ENCODE measurements at regions of chr1 and their contacts with region 1.

Region 1: DNA sequence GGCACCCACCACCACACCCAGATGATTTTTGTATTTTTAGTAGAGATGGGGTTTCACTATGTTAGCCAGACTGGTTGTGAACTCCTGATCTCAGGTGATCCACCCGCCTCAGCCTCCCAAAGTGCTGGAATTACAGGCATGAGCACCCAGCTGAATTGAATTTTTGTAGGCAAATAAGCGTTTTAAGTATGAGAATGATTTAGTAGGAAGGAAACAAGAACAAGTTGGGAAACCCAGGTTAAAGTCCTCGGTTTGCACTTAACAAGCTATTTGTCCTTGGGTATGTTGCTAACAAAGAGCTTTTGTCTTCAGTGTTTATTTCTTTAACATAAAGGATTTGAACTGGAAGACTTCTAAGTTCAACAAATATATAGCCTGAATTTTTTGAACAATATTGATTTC is 23.9 kb downstream of the BTF3L4 start:
- DNase-seq: no peak
- ATAC-seq: no peak
- H3K4me3 ChIP-seq: no peak overlapping the region
- H3K4me3 Mint-ChIP-seq: no peak overlapping the region
- H3K27ac ChIP-seq: no peak overlapping the region
- H3K27ac Mint-ChIP-seq: peak overlapping the region in 1 of 2 donors; percentile 59
- H3K4me1 ChIP-seq: no peaks in the 10 kb centered on the region
- H3K4me1 Mint-ChIP-seq: peaks cover 0 to 5% (median 3%) of the 10 kb centered on the region in 3 donors
- H3K27me3 ChIP-seq: no peaks in the 10 kb centered on the region
- H3K27me3 Mint-ChIP-seq: no peaks in the 10 kb centered on the region

Region 2: DNA sequence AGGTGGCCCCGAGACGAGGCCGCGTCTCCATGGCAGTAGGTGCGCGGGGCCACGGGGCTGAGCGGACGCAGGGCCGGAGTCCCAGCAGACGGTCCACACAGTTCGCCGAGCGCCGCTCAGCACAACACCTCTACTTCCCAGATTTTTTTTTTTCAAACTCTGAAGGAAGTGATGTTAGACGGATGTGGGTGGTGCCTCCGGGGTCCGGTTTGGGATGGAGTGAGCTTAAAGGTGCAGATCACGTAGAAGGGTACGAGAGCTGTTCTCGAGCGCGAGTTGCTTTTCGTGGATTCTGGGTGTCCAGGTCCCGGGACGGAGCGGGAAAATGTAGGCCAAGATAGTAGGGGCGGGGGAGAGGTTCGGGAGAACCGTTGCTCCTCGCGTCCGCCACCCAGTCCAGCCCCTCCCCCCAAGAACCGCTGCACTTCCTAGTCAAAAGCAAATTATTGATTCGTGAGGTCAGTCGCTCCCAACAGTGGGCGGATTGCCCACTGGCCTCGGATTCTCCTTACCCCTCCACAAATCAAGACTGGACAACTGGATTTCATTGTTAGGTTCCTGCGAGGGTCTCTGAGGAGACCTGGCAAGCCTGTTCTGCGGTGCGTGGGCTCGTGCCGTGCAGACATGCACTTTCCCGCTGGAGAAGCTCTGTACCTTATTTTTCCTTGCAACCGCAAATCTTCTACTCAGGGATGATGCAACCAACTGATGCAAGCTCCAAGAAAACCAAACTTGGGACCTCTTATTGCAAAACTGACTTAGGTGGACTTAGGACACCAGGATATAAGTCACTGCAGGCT is 24.7 kb before region 1 on chr1 and contains the start of gene TXNDC12:
- CTCF ChIA-PET with region 1: no interaction called
- POLR2A ChIA-PET with region 1: interaction called in 1 of 2 experiments, 11 read pairs
- DNase-seq: peak in 34 of 35 experiments; percentile 6 to 75 (median 38)
- ATAC-seq: peak; percentile 11 to 43 (median 34)
- H3K4me3 ChIP-seq: peak within 1 kb of the TSS; percentile 84 to 99
- H3K4me3 Mint-ChIP-seq: peak within 1 kb of the TSS; percentile 94 to 97 (median 97)
- H3K27ac ChIP-seq: peak within 1 kb of the TSS; percentile 84
- H3K27ac Mint-ChIP-seq: peak within 1 kb of the TSS; percentile 95 to 96
- H3K4me1 ChIP-seq: peaks cover 14 to 15% of the 10 kb centered on the region in 2 experiments
- H3K4me1 Mint-ChIP-seq: peaks cover 63 to 69% (median 63%) of the 10 kb centered on the region in 3 donors
- H3K27me3 ChIP-seq: no peaks in the 10 kb centered on the region
- H3K27me3 Mint-ChIP-seq: no peaks in the 10 kb centered on the region
- total RNA-seq, gene TXNDC12: 26.1 to 44.8 (median 40.3) TPM

Region 3: DNA sequence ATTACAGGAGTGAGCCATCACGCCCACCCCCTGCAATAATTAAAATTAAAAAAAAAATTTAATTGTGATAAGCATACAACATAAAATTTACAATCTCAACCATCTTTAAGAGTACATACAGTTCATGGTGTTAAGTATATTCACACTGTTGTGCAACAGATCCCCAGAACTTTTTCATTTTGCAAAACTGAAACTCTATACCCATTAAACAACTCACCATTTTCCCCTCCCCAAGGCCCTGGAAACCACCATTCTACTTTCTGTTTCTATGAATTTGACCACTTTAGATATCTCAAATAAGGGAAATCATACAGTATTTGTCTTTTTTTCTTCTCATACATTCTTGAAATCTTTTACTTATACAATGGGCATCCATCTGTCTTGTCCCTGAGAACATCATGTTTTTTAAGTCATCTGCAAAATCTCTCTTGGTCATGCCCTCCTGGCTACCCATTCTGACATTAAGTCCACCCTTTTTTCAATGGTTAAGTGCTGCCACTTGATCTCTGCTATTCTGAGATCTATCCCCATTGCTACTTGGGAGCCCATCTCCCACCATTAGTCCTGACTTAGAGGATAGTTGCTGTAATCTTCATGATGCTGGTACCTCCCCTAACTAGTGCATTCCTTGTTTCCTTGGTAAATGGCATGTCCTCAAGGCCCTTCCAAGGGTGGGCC is 22.5 kb after region 1 on chr1:
- CTCF ChIA-PET with region 1: no interaction called
- POLR2A ChIA-PET with region 1: interaction called in 1 of 2 experiments, 12 read pairs
- DNase-seq: no peak
- ATAC-seq: no peak
- H3K4me3 ChIP-seq: no peak overlapping the region
- H3K4me3 Mint-ChIP-seq: no peak overlapping the region
- H3K27ac ChIP-seq: no peak overlapping the region
- H3K27ac Mint-ChIP-seq: no peak overlapping the region
- H3K4me1 ChIP-seq: no peaks in the 10 kb centered on the region
- H3K4me1 Mint-ChIP-seq: no peaks in the 10 kb centered on the region
- H3K27me3 ChIP-seq: no peaks in the 10 kb centered on the region
- H3K27me3 Mint-ChIP-seq: no peaks in the 10 kb centered on the region

Region 4: DNA sequence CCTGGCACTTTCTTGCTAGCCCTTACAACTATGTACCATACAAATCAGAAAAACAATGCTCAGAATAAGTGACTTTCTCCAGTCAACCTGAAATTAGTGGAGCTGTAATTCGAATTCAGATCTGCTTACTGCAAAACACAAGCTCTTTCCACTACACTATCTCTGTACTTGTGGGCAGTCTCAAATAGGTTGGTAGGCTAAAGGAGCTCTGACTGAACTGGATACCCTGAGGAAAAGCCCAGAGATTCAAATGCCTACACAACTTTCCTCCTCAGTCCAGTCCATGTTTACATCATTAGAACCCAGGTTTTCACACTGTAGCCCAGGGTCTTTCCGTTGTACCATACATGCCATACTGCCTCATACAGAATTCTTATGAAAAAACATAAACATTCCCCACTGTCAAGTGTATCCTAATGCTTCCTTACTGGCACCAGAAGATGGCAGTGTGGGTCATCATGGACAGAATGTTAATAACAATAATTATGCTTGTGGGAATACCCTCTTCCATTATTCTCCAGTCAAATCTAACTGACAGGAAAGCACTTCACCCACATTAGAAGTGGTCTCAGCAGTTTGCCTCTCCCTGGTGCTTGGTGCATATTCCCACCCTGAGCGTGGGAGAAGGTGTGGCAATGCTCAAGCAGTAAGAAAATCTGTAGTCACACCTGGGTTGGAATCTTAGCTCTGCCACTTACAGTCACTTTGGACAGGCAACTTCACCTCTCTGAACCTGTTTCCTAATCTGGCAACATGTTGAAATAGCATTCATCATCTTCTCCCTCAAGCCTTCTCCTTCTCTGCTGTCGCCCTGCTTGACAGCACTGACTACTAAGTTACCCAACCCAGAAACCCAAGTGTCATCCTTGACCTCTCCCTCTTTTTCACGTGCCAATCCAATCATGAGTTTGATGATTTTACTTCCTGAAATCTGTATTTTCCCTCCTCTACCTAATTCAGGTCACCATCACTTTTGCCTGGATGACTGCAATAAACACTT is 47.5 kb after region 1 on chr1:
- CTCF ChIA-PET with region 1: no interaction called
- POLR2A ChIA-PET with region 1: no interaction called
- DNase-seq: peak in 11 of 35 experiments; percentile 3 to 59 (median 9)
- ATAC-seq: peak in 3 of 4 experiments; percentile 42 to 59 (median 54)
- H3K4me3 ChIP-seq: no peak overlapping the region
- H3K4me3 Mint-ChIP-seq: no peak overlapping the region
- H3K27ac ChIP-seq: no peak overlapping the region
- H3K27ac Mint-ChIP-seq: no peak overlapping the region
- H3K4me1 ChIP-seq: no peaks in the 10 kb centered on the region
- H3K4me1 Mint-ChIP-seq: no peaks in the 10 kb centered on the region
- H3K27me3 ChIP-seq: peaks cover 0 to 7% of the 10 kb centered on the region in 2 experiments
- H3K27me3 Mint-ChIP-seq: peaks cover 16 to 19% of the 10 kb centered on the region in 2 donors